Mammary epithelial cell (primary cell): ENCODE measurements at regions of chr10 and their contacts with region 1.

Region 1: GRCh38 chr10:62384057-62384446 is 9.9 kb downstream of the ZNF365 start:
- DNase-seq: peak; percentile 99
- H3K4me3 ChIP-seq: peak overlapping the region in 1 of 3 experiments; percentile 3
- H3K27ac ChIP-seq: peak overlapping the region; percentile 100
- H3K4me1 ChIP-seq: peaks cover 85% of the 10 kb centered on the region
- H3K27me3 ChIP-seq: no peaks in the 10 kb centered on the region
- CTCF ChIP-seq: no peak

Region 2: GRCh38 chr10:62050893-62051433 is 333.1 kb before region 1 on chr10:
- CTCF ChIA-PET with region 1: no interaction called
- dilution Hi-C with region 1: no loop called
- in situ Hi-C with region 1: loop called (anchors 25 kb)
- intact Hi-C with region 1: loop called (anchors 10 kb)
- DNase-seq: peak; percentile 90
- H3K4me3 ChIP-seq: peak overlapping the region; percentile 46 to 53 (median 47)
- H3K27ac ChIP-seq: peak overlapping the region; percentile 94
- H3K4me1 ChIP-seq: peaks cover 38% of the 10 kb centered on the region
- H3K27me3 ChIP-seq: no peaks in the 10 kb centered on the region
- CTCF ChIP-seq: no peak

Region 3: DNA sequence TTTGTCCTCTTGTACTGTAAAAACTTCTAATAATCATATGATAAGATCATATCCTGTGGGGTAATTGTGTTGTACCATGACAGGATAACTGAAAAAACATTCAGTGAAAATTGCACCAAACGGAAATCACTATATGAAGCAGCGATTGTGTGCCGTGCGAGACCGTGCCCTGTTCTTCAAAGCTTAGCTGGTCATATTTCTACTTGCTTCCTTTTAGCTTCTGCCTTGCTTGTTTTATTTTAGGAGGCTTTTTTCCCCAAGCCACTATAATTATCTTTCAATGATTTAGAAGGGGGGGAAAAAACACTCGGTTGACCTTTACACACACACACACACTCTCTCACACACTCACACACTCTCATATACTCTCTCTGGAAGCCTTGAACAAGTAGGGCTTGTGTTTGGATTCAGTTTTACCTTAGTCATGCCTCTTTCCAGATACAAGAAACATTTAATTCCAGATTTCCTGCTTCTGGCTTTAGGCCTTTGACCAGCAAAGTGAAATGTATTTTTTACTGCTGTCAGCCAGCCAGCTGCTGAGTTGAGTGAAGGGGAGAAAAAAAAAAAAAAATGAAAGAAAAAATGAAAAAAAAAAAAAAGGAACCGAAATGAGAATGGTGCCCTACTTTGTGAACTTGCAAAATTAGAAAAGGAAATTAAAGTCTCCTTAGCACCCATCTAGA is 301.2 kb before region 1 on chr10:
- CTCF ChIA-PET with region 1: no interaction called
- dilution Hi-C with region 1: loop called (anchors 25 kb)
- in situ Hi-C with region 1: no loop called
- intact Hi-C with region 1: loop called (anchors 5 kb)
- DNase-seq: peak; percentile 38
- H3K4me3 ChIP-seq: peak overlapping the region in 2 of 3 experiments; percentile 1 to 21
- H3K27ac ChIP-seq: peak overlapping the region; percentile 98
- H3K4me1 ChIP-seq: peaks cover 36% of the 10 kb centered on the region
- H3K27me3 ChIP-seq: no peaks in the 10 kb centered on the region
- CTCF ChIP-seq: no peak

Region 4: DNA sequence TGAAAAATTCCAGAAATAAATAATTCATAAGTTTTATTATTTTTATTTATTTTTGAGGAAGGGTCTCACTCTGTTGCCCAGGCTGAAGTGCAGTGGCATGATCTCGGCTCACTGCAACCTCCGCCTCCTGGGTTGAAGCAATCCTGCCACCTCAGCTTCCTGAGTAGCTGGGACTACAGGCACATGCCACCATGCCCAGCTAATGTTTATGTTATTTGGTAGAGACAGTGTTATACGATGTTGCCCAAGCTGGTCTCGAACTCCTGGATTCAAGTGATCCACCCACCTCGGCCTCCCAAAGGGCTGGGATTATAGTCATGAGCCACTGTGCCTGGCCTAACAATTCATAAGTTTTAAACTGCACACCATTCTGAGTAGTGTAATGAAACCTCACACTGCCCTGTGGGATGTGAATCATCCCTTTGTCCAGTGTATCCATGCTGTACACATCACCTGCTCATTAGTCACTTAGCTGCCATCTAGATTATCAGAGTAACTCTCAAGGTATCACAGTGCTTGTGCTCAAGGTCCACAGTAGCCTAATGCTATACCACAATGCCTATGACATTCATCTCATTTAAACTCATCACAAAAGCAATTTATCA is 133.4 kb before region 1 on chr10:
- CTCF ChIA-PET with region 1: no interaction called
- dilution Hi-C with region 1: no loop called
- in situ Hi-C with region 1: loop called (anchors 5 to 25 kb)
- intact Hi-C with region 1: no loop called
- DNase-seq: peak; percentile 98
- H3K4me3 ChIP-seq: no peak overlapping the region
- H3K27ac ChIP-seq: peak overlapping the region; percentile 51
- H3K4me1 ChIP-seq: no peaks in the 10 kb centered on the region
- H3K27me3 ChIP-seq: no peaks in the 10 kb centered on the region
- CTCF ChIP-seq: no peak

Region 5: DNA sequence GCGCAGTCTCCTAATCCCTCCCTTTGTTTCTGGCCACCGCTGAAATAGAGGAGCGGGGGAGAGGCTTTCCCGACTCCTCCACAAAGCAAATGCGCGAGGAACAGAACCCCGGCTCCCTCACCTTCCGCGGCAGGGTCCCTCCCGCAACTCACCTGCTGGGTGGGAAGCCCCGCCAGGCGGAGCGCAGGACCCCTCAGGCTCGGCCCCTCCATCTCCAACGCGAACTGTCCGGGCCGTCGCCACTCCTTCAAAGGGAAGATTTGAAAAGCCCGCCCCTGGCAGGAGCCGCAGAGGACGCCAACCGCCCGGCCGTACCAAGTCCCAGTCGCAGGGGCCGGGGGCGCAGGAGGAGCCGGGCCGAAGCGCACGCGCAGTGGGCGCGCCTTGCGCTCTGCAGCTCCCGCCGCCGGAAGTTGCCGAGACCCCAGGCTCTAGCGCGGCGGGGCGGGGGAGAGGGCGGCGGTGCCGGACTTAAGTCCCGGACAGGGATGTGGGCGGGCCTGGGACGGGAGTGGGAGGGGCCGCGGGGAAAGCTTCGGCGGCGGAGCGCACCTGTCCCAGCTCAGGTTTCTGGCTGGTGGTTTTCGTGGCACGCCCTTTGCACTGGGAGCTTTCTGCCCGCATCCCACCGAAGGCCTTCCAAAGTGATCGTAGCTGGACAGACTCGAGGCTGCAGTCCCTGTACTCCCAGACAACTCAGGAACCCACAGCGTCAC is 115.5 kb before region 1 on chr10 and contains the start of gene RTKN2:
- CTCF ChIA-PET with region 1: no interaction called
- dilution Hi-C with region 1: loop called (anchors 5 kb)
- in situ Hi-C with region 1: loop called in 1 of 2 experiments (anchors 25 kb)
- intact Hi-C with region 1: no loop called
- DNase-seq: peak; percentile 88
- H3K4me3 ChIP-seq: peak within 1 kb of the TSS; percentile 67 to 93 (median 90)
- H3K27ac ChIP-seq: peak within 1 kb of the TSS; percentile 33
- H3K4me1 ChIP-seq: peaks cover 29% of the 10 kb centered on the region
- H3K27me3 ChIP-seq: no peaks in the 10 kb centered on the region
- CTCF ChIP-seq: no peak
- total RNA-seq, gene RTKN2: 2.7 to 4.5 TPM

Region 6: DNA sequence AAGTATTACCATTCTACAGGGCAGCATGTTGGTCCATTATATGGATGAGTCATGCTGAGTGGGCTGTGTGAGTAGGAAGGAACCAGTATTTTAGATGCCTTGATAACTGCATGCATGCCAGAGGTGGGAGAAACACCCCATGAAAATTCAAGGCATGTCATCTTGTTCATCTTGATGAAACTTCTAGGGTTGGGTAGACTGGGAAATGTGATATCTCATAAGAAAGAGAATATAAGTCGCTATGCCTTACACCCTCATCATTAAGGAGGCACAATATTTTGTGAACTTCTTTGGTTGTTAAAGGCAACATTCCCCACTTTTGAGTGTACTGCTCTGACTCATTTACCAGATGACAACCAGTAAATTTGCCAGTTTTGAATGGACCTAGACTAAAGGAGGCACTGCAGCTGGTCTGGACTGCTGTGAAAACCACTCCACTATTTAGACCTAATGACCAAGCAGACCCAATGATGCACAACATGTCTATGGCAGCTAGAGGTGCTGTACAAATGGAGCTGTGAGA is 38.1 kb after region 1 on chr10:
- CTCF ChIA-PET with region 1: no interaction called
- dilution Hi-C with region 1: no loop called
- in situ Hi-C with region 1: no loop called
- intact Hi-C with region 1: loop called (anchors 2 kb)
- DNase-seq: peak; percentile 88
- H3K4me3 ChIP-seq: no peak overlapping the region
- H3K27ac ChIP-seq: peak overlapping the region; percentile 59
- H3K4me1 ChIP-seq: peaks cover 30% of the 10 kb centered on the region
- H3K27me3 ChIP-seq: no peaks in the 10 kb centered on the region
- CTCF ChIP-seq: peak; percentile 11

Region 7: DNA sequence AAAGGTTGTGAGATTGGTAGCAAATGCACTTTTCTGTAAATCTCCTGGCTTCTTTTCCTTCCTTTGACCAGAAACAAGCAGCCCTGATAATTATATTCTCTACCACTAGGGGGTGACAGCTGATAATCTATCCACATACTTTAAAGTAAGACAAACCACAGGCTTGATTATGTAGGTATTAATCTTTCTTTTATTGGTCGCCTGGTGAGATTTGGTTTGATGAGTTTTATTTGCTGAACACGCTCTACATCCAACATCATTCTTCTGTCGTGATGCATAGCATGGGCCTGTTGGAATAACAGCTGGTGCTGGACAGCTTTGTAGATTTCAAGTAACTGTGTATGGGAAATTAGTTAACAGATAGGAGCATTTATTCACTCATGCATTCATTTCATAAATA is 53.6 kb after region 1 on chr10:
- CTCF ChIA-PET with region 1: no interaction called
- dilution Hi-C with region 1: loop called (anchors 5 kb)
- in situ Hi-C with region 1: loop called in 1 of 2 experiments (anchors 5 kb)
- intact Hi-C with region 1: no loop called
- DNase-seq: peak; percentile 79
- H3K4me3 ChIP-seq: no peak overlapping the region
- H3K27ac ChIP-seq: no peak overlapping the region
- H3K4me1 ChIP-seq: peaks cover 21% of the 10 kb centered on the region
- H3K27me3 ChIP-seq: no peaks in the 10 kb centered on the region
- CTCF ChIP-seq: peak; percentile 70 to 71